ENCODE measurements at regions of chr18 and their contacts with region 1.

Region 1: GRCh38 chr18:8538935-8539334 is 70.3 kb upstream of the RAB12 start:
- DNase-seq: no peak
- H3K4me3 ChIP-seq: no peak overlapping the region
- H3K27me3 ChIP-seq: no peaks in the 10 kb centered on the region
- CTCF ChIP-seq: no peak

Region 2: GRCh38 chr18:7896805-7897518 is 642.0 kb before region 1 on chr18:
- CTCF ChIA-PET with region 1: no interaction called
- POLR2A ChIA-PET with region 1: no interaction called
- DNase-seq: no peak
- H3K4me3 ChIP-seq: no peak overlapping the region
- H3K27me3 ChIP-seq: no peaks in the 10 kb centered on the region
- CTCF ChIP-seq: no peak

Region 3: GRCh38 chr18:8153887-8154583 is 384.9 kb before region 1 on chr18:
- CTCF ChIA-PET with region 1: no interaction called
- POLR2A ChIA-PET with region 1: interaction called, 12 read pairs
- DNase-seq: peak; percentile 33
- H3K4me3 ChIP-seq: no peak overlapping the region
- H3K27me3 ChIP-seq: no peaks in the 10 kb centered on the region
- CTCF ChIP-seq: no peak

Region 4: DNA sequence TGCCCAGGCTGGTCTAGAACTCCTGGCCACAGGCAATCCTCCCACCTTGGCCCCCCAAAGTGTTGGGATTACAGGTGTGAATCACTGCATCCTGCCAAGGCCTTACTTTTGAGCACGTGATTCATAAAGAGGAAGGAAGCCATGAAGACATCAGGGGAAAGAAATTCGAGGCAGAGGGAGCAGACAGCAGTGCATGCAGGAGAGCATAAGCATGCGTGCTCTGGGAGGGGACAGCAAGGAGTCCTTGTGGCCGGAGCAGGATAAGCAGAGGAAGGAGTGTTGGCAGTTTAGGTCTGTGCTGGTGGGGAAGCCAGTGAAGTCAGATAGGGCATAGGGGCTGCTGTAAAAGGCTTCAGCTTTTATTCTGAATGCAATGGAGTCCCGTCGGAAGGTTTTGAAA is 330.2 kb before region 1 on chr18:
- CTCF ChIA-PET with region 1: no interaction called
- POLR2A ChIA-PET with region 1: no interaction called
- DNase-seq: no peak
- H3K4me3 ChIP-seq: no peak overlapping the region
- H3K27me3 ChIP-seq: no peaks in the 10 kb centered on the region
- CTCF ChIP-seq: no peak

Region 5: GRCh38 chr18:8507361-8507760 is 31.6 kb before region 1 on chr18:
- CTCF ChIA-PET with region 1: no interaction called
- POLR2A ChIA-PET with region 1: no interaction called
- DNase-seq: no peak
- H3K4me3 ChIP-seq: no peak overlapping the region
- H3K27me3 ChIP-seq: peaks cover 8% of the 10 kb centered on the region
- CTCF ChIP-seq: peak; percentile 31; the same call in 1 of the 2 replicates

Measured in BJ (cell line).